ENCODE measurements at regions of chr1 and their contacts with region 1.

Region 1: DNA sequence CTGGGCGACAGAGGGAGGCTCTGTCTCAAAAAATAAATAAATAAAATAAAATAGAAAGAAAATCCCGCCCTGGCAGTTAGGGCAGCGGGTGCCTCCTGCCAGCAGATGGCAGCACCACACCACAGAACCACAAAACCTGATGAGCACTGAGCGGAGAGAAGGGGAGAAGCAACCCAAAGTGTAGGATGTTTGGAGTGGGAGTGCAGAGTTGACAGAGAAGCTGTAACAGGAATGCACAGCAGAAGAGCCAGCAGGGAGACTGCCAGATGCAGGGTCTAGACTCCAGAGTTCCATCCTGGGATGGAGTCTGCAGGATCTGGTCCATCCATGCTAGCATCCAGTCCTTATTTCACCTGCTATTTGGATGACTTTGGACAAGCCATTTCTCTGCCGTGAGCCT is 29.7 kb upstream of the KIRREL1 start:
- DNase-seq: peak; percentile 67
- ATAC-seq: peak; percentile 80 to 88

Region 2: DNA sequence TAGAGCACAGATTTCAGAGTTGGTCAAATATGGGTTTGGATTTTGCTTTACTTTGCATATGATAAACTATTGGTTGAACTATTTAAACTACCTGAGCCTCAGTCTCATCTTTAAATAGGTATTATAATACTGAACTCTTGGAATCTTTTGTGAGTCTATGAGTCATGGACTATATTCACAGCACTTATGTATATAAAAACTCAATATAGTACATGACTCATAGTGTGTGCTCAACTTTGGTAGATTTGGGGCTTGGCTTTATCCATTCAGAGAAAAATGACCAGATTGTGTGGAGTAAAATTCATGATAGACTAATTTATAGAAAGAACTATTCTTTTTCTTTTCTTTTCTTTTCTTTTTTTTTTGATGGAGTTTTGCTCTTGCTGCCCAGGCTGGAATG is 291.8 kb before region 1 on chr1:
- intact Hi-C with region 1: no loop called
- DNase-seq: no peak
- ATAC-seq: no peak

Region 3: DNA sequence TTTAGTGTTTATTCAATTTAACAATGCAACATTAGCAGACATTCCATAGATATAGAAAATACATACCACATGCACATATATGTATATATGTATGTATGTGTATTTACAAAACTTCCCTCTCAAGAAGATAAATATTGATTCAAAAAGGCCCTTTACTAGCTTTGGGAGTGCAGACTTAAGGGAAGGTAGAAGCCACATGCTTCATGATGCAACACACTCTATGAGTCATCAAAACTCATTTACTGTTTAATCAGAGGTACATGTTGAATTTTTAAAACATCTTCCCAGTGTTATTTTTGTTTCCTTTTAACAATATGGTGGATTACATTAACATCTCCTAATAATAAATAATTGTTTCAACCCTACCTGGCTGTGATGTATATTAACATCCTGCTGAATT is 31.6 kb before region 1 on chr1:
- intact Hi-C with region 1: no loop called
- DNase-seq: no peak
- ATAC-seq: no peak

Region 4: DNA sequence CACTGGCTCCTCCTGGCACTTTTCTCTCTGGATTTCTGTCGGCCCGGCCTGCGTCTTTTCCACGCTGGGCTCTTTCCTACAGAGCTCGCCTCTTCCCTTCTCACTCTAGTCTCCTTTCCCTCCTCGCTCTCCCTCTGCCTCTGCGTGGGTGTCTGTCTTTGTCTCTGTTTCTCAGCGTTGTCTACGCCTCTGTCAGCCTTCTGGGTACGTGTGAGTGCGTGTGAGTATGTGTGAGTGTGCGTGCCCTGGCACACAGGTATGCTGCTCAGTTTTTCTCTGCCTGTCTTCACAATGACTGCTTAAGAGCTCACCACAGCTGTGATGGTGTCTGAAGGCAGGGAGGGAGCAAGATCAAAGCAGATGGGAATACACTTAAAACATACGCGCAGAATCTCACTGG is 107.4 kb after region 1 on chr1:
- intact Hi-C with region 1: no loop called
- DNase-seq: no peak
- ATAC-seq: peak in 1 of 2 donors; percentile 14

Region 5: DNA sequence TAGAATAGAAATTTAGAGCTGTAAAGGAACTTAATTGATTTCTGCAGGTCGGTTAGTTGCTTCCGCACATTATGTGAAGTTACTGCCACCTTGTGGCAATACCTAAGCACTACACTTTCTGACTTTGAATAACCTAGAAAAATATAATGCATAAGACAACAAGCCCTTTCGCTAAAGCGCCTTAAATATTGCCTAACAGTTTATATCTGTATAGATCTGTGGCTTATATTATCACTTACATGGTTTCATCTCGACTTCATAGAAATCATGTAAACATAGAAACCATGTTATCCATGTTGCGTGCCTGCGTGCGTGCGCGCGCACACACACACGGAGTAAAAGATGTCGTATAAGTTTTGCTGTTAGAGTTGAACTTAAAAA is 1035.1 kb after region 1 on chr1:
- intact Hi-C with region 1: loop called in 1 of 2 experiments (anchors 10 kb)
- DNase-seq: peak; percentile 66
- ATAC-seq: peak; percentile 51 to 66

Region 6: DNA sequence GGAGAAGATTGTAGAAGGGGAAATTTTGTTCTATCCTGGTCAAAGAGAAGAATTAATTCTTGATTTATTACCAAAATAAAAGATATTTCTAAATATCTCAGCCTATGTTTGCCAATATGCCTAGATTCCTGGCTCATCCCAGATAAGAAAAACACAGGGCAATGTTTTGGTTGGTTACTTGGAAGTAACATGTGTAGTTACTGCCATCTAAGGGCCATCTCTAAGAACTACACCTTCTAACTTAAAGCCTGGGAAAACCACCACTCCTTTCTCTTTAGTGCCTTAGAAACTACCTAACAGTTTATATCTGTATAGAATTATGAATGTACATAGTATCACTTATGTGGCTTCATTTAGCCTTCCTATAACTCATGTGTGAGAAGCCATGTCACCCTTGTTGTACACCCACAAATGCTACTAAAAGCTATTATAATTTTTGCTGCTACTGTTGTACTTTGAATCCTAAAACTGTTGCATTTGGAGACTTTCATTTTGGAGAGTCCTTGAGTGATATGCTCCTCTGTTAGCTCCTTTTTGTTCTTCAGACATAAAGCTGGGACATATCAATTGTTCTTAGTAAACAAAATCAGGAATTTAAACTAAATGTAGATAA is 1108.4 kb after region 1 on chr1:
- intact Hi-C with region 1: loop called in 1 of 2 experiments (anchors 10 kb)
- DNase-seq: no peak
- ATAC-seq: peak; percentile 46 to 71